Sciatic nerve (tissue), 2 donors: ENCODE measurements at regions of chr17 and their contacts with region 1.

Region 1: GRCh38 chr17:29533976-29534375 is 32.9 kb downstream of the ABHD15 start:
- DNase-seq: no peak
- ATAC-seq: no peak

Region 2: DNA sequence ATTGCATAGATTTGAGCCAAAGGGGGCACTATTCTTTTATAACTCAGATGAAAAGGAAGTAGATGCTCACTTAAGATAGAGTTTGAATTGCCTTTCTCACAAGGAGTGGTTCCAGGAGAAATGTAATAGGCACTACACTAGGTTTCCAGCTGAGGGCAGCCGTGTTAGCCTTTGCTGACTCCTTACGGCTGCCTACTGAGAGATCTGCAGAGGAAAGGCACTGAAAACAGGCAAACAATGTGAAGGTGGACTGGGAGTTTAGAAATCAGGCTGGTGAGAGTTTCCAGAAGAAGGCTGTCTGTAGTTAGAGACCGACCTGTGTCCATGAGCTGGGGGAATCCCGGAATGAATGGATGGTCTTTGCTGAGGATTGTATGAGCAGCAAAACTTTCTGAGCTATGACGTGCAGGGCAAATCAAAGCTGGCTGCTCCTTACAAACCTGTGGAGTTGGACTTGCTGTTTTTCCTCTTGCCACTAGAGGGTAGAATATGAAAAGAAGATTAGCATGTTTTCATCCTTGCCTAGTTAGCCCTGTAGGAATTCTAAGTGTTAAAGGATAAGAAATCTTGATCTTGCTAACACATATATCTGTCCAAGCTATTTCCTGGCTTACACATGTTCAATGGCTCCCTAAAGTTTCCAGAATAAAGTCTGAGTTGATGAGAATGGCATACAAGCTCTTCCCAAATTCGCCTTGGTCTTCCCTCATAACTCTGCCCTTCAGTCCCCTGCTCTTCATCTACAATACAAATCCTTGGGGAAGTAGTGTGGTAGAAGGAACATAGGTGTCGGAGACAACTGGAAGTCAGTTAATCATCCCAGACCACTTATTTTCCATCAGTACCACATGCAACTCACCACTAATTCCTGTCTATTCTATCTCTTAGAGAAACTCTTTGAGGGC is 163.9 kb before region 1 on chr17:
- intact Hi-C with region 1: loop called (anchors 5 kb)
- DNase-seq: no peak
- ATAC-seq: peak; percentile 98